Adrenal gland (tissue), 19 donors: ENCODE measurements at regions of chr6 and their contacts with region 1.

Region 1: DNA sequence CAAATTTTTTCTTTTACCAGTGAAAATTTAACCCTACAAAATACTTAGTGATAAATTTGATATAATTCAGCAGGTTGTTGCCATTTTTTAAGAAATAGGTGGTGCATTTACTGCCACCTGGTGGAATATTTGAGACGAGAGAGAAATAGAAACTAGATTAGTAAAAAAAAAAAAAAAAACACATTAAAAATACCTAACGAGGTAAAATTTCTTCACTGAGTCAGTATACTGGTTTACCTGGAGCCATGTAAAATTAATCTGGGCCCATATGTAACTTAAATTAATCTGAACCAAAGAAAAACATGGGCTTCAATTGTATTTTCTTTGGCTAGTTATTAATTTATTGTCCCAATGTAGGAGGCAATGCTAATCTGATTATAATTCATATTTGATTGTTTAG is 520.8 kb downstream of the EPM2A start:
- DNase-seq: peak in 2 of 7 donors; percentile 13 to 21
- H3K4me3 ChIP-seq: no peak overlapping the region
- H3K27ac ChIP-seq: no peak overlapping the region
- H3K4me1 ChIP-seq: no peaks in the 10 kb centered on the region
- H3K27me3 ChIP-seq: no peaks in the 10 kb centered on the region
- CTCF ChIP-seq: peak; percentile 29 to 75 (median 52)
- POLR2A ChIP-seq: no peak

Region 2: DNA sequence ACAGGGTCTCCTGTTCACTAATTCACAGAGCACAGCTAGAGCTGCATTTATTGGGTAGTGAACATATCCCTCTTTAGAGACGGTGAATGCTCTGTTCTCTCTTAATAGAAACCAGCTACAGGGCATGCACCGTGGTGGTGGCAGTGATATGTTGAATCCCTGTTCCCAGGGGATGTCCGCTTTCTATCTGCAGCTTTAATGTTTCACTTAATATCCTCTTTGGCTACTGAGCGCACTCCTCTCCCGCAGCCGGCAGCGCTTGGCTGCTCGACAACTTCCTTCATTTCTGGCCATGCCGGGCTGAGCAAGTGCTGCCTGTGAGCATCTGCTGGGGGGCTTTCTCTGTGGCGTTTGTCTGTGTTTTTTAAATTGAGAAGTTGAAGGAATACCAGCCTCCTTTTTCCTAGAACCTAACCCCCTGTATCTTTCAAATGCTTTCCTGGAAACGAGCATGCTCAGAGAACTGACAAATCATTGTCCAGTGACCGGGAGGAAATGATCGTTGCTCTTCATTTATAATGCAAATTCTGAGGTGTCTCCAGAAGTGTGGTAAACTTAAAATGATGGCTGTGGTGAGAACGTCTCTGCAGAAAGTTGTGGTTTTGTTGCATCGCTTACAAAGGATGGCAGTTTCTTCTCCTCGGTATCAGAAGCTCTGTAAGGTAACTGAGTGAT is 631.5 kb before region 1 on chr6:
- intact Hi-C with region 1: loop called in 1 of 2 experiments (anchors 10 kb)
- DNase-seq: peak in 5 of 7 donors; percentile 23 to 69 (median 36)
- H3K4me3 ChIP-seq: no peak overlapping the region
- H3K27ac ChIP-seq: peak overlapping the region in 1 of 5 donors; percentile 3
- H3K4me1 ChIP-seq: peaks cover 4 to 51% of the 10 kb centered on the region in 2 donors
- H3K27me3 ChIP-seq: no peaks in the 10 kb centered on the region
- CTCF ChIP-seq: no peak
- POLR2A ChIP-seq: no peak

Region 3: GRCh38 chr6:144855812-144856531 is 358.6 kb before region 1 on chr6:
- intact Hi-C with region 1: no loop called
- DNase-seq: no peak
- H3K4me3 ChIP-seq: no peak overlapping the region
- H3K27ac ChIP-seq: no peak overlapping the region
- H3K4me1 ChIP-seq: no peaks in the 10 kb centered on the region
- H3K27me3 ChIP-seq: no peaks in the 10 kb centered on the region
- CTCF ChIP-seq: no peak
- POLR2A ChIP-seq: no peak

Region 4: GRCh38 chr6:144912474-144912873 is 302.1 kb before region 1 on chr6:
- intact Hi-C with region 1: no loop called
- DNase-seq: no peak
- H3K4me3 ChIP-seq: no peak overlapping the region
- H3K27ac ChIP-seq: no peak overlapping the region
- H3K4me1 ChIP-seq: no peaks in the 10 kb centered on the region
- H3K27me3 ChIP-seq: no peaks in the 10 kb centered on the region
- CTCF ChIP-seq: no peak
- POLR2A ChIP-seq: no peak

Region 5: GRCh38 chr6:144931172-144932035 is 283.2 kb before region 1 on chr6:
- intact Hi-C with region 1: loop called in 1 of 2 experiments (anchors 10 kb)
- DNase-seq: peak in 6 of 7 donors; percentile 23 to 79 (median 40)
- H3K4me3 ChIP-seq: no peak overlapping the region
- H3K27ac ChIP-seq: no peak overlapping the region
- H3K4me1 ChIP-seq: no peaks in the 10 kb centered on the region
- H3K27me3 ChIP-seq: no peaks in the 10 kb centered on the region
- CTCF ChIP-seq: peak; percentile 30 to 72 (median 53)
- POLR2A ChIP-seq: no peak